ENCODE measurements at regions of chr14 and their contacts with region 1.

Region 1: DNA sequence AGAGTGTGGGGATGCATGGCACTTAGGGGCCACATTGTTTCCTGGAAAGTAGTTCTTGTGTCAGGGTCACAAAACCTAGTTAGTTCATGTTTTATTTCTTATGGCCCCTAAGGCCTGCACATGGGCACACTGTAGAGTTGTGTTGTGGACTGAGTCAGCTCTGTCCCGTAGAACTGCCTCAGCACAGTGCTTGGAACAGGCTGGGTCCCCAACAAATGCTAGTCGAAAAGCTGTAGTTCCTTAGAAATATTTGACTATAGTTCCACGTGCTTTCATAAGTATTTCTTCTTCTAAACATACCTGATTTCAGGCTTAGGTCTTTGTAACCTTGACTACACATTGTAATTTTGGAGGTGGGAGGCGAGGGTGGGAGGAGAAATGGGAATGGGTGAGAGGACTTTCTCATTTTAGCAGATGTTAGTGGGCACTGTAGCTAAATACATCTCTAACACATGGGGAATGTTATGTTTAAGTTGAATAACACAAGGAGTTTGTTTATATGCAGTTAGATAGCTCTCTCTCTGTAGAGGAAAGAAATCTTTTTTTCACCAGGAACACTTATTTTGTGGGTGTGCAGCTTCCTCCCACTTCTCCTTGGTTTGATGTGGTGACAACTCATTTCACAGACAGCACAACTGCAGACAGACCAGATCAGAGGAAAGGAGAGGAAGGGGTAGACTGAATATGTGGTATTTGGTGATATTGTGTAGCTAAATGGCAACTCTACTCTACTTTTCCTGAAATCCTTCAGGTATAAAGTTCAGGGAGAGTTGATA is 39.5 kb upstream of the DACT1 start:
- DNase-seq: peak; percentile 77
- H3K4me3 Mint-ChIP-seq: peak overlapping the region; percentile 47
- H3K27ac Mint-ChIP-seq: peak overlapping the region; percentile 39
- H3K4me1 Mint-ChIP-seq: peaks cover 24% of the 10 kb centered on the region
- H3K27me3 Mint-ChIP-seq: peaks cover 5% of the 10 kb centered on the region

Region 2: DNA sequence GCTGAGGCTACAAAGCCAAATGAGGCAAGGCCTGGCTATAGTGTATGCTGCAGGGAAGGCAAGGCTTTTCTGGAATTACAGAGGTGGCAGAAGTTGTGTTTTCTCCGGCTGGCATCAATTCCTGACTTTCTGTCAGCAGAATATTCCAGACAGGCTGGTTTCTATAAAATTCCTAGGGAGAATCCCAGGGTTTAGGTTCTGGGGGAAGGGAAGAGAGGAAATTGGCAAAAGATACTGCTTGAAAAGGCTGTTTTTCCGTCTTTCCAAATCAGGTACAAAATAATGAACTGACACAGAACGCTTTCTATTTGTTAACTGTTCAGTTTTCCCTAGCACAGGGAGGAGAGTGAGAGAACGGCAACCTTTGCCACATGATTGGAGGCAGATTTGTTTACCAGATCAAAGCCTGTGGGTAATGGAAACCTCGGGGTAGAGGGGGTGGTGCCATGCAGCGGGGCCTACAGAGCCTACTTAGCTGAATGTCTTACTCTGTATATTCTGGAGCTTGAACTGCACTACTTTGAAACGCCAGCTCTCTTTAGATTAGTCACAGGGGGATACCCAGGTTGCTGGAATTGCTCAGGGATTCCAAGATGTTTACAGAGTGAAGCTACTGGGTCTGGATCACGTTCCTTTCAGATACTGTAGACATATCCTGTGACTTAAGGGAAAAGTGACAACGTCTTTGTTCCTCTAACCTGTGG is 26.3 kb before region 1 on chr14:
- intact Hi-C with region 1: loop called (anchors 1 kb)
- DNase-seq: peak; percentile 78
- H3K4me3 Mint-ChIP-seq: peak overlapping the region; percentile 68
- H3K27ac Mint-ChIP-seq: peak overlapping the region; percentile 84
- H3K4me1 Mint-ChIP-seq: peaks cover 28% of the 10 kb centered on the region
- H3K27me3 Mint-ChIP-seq: no peaks in the 10 kb centered on the region

Measured in activated CD4-positive, alpha-beta T cell treated with anti-CD3 and anti-CD28 coated beads, Interleukin-2, amount 10 ng/mL, durations not matched to agents 24 days and 14 days (primary cell).